Dendritic cell treated with granulocyte-macrophage colony-stimulating factor and Interleukin-4, amounts not matched to agents 40 ng/mL and 50 ng/mL, for 4 days (primary cell): ENCODE measurements at regions of chr5 and their contacts with region 1.

Region 1: DNA sequence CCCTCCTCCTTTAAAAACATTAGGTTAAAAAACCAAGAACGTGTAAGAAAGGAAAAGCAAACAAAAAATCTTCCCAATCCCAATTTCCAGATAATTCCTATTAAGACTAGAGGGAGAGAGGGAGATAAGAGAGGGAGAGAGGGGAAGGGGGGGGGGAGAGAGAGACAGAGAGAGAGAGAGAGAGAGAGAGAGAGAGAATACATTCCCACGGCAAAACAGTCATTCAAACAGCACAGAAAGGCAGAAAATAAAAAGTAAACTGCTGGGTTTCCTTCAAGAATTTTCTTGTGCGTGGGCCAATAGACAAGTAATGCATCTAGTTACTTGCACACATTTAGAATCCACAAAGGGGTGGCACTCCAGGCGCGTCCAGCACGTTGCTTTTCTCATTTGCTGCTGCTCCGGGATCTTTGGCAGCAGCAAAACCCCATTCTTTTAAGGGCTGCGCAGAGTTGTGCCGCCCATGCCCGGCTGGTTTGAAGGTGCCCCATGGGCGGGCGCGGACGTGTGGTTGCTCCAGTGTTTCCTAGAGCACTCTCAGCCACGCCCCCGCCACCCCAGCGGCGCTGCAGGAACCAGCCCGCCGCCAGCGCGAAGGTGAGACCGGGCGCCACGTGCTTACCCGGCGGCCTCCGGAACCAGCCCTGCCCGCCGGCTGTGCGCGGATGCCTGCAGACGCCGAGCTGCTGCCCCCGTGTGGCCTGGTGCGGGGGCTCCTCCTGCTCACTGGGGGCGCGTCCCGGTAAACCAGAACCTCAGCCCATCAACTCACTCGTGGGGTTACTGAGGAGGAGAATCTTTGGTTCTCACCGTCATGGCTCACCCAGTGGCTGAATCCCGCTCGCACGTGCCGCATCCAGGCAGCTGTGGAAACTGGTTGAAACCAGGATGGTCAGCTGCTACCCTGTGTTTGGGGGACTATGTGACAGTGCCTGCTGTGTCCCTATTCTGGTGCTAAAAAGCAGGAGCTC is 44.6 kb downstream of the STC2 start:
- H3K4me3 Mint-ChIP-seq: peak overlapping the region; percentile 18
- H3K27ac Mint-ChIP-seq: no peak overlapping the region
- H3K4me1 Mint-ChIP-seq: no peaks in the 10 kb centered on the region
- H3K27me3 Mint-ChIP-seq: peaks cover 73% of the 10 kb centered on the region

Region 2: GRCh38 chr5:173163219-173163618 is 120.4 kb before region 1 on chr5:
- intact Hi-C with region 1: loop called (anchors 10 kb)
- H3K4me3 Mint-ChIP-seq: no peak overlapping the region
- H3K27ac Mint-ChIP-seq: no peak overlapping the region
- H3K4me1 Mint-ChIP-seq: peaks cover 5% of the 10 kb centered on the region
- H3K27me3 Mint-ChIP-seq: no peaks in the 10 kb centered on the region

Region 3: GRCh38 chr5:173458821-173459609 is 175.4 kb after region 1 on chr5:
- intact Hi-C with region 1: no loop called
- H3K4me3 Mint-ChIP-seq: no peak overlapping the region
- H3K27ac Mint-ChIP-seq: no peak overlapping the region
- H3K4me1 Mint-ChIP-seq: peaks cover 23% of the 10 kb centered on the region
- H3K27me3 Mint-ChIP-seq: no peaks in the 10 kb centered on the region